A549 (cell line): ENCODE measurements at regions of chr7 and their contacts with region 1.

Region 1: DNA sequence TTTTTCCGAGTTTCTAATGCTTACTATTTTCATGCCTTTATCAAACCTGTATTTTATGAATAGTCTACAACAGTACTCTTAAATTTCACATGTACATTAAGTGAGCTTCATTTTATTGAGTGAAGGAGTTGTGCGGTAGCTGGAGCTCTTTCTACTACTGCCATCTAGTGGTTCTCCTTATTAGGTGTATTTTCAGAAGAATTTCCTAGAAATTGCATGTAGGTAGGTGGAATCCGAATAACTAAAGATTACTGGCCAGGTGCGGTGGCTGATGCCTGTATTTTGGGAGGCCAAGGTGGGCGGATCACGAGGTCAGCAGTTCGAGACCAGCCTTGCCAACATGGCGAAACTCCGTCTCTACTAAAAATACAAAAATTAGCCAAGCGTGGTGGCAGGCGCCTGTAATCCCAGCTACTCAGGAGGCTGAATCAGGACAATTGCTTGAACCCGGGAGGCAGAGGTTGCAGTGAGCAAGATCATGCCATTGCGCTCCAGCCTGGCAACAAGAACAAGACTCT is 38.3 kb downstream of the LRRC72 start:
- DNase-seq: peak; percentile 58 to 59
- ATAC-seq: peak; percentile 84 to 89; a peak in 5 of 6 replicates
- H3K4me3 ChIP-seq: no peak overlapping the region
- H3K27ac ChIP-seq: no peak overlapping the region
- H3K4me1 ChIP-seq: no peaks in the 10 kb centered on the region
- CTCF ChIP-seq: peak; percentile 88
- EP300 ChIP-seq: no peak
- POLR2A ChIP-seq: no peak
- RAD21 ChIP-seq: peak; percentile 91 to 93

Region 2: DNA sequence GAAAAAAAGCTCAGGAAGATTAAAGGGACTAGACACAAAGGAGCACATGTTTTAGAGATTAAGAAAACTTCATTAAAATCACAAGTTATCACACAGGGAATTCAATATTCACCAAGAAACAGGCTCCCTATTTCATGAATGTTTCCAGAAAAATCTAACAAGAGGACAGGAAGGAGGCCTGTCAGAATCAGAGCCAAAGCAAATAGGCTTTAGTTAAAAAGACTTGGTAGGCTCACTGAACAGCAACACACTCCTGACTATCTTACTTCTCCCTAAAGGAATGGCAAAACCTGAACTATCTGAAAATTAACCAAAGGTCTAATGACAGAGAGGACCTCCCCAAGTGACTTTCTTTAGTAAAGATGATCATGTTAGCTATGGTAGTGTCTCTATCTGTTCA is 690.2 kb before region 1 on chr7:
- CTCF ChIA-PET with region 1: no interaction called
- POLR2A ChIA-PET with region 1: no interaction called
- DNase-seq: no peak
- ATAC-seq: no peak
- H3K4me3 ChIP-seq: no peak overlapping the region
- H3K27ac ChIP-seq: no peak overlapping the region
- H3K4me1 ChIP-seq: no peaks in the 10 kb centered on the region
- CTCF ChIP-seq: no peak
- EP300 ChIP-seq: no peak
- POLR2A ChIP-seq: no peak
- RAD21 ChIP-seq: no peak

Region 3: DNA sequence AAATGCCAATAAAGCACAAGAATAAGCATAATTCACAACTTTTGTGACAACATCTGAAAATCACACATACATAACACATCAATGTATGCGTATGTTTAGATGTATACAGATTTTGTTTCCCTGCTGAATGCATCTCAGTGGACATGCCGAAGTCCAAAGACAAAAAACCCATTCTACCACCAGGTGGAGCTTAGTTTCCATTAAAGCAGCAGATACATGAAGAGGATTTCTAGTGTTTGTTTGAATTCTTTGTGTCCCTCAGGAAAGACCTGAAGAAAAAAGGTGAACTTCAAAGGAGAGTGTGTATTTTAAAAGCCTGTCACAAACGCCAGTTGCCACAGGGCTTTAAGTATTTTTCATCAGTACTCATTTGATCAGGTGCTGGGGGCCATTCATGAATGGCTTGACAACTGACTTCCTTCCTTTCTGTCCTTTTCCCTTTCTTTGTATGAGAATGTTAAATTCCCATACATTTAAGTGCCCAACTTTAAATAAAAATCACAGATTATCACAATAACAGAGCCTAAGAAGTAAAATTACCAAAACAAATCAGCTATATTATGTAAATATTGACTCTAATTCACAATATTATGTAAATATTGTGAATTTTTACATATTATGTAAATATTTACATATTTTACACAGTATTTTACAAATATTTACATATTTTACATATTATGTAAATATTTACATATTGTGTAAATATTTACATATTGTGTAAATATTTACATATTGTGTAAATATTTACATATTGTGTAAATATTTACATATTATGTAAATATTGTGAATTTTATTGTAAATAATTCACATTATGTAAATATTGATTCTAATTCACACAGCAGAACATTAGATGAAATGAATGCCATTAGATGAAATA is 486.7 kb before region 1 on chr7:
- CTCF ChIA-PET with region 1: interaction called, 45 read pairs
- POLR2A ChIA-PET with region 1: no interaction called
- DNase-seq: peak; percentile 20 to 71
- ATAC-seq: peak; percentile 87 to 88; a peak in 5 of 6 replicates
- H3K4me3 ChIP-seq: no peak overlapping the region
- H3K27ac ChIP-seq: no peak overlapping the region
- H3K4me1 ChIP-seq: peaks cover 1% of the 10 kb centered on the region; the same call in 1 of the 3 replicates
- CTCF ChIP-seq: peak; percentile 78
- EP300 ChIP-seq: no peak
- POLR2A ChIP-seq: no peak
- RAD21 ChIP-seq: peak; percentile 82 to 85

Region 4: DNA sequence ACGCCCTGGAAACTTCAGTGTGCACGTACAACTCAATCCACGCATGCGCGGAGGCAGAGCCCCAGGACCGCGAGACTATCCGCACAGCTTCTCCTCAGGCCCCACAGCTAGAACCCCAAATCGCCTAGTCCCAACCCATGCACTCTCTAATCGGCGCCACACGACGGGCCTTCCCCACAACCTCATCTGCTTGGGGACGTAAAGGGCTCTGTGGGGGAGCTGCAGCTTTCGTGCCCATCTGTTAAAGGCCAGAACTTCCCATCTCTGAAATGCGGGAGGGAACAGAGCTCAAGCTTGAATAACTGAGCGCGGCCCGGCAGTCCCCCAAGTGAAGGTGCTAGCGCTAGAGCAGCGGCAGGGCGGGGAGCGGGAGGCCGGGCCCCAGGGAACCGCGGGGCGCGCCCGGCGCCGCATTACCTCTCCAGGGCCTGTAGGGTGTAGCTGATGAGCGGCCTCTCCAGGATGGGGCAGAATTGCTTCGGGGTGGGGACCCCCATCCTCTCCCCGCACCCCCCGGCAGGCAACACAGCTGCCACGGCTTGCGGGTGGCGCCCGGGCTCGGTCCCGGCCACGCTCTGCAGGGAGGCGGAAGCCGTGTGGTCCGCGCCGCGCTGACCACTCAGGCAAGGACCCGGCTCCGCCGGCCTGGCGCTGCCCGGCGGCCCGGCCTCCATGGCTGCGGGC is 144.2 kb before region 1 on chr7:
- CTCF ChIA-PET with region 1: interaction called, 12 read pairs
- POLR2A ChIA-PET with region 1: interaction called, 9 read pairs
- DNase-seq: peak; percentile 76 to 94
- ATAC-seq: peak; percentile 96 to 97
- H3K4me3 ChIP-seq: peak overlapping the region; percentile 73
- H3K27ac ChIP-seq: peak overlapping the region; percentile 98
- H3K4me1 ChIP-seq: peaks cover 12% of the 10 kb centered on the region
- CTCF ChIP-seq: 0 out of 3 replicates have a peak, but pooled peaks have one; percentile 10
- EP300 ChIP-seq: no peak
- POLR2A ChIP-seq: peak; percentile 90
- RAD21 ChIP-seq: 0 out of 5 replicates have a peak, but pooled peaks of 1 of the 2 experiments have one; percentile 15

Region 5: GRCh38 chr7:16431646-16432424 is 133.1 kb before region 1 on chr7:
- CTCF ChIA-PET with region 1: interaction called, 145 read pairs
- POLR2A ChIA-PET with region 1: interaction called, 3 read pairs
- DNase-seq: peak; percentile 50 to 65
- ATAC-seq: peak; percentile 99
- H3K4me3 ChIP-seq: no peak overlapping the region
- H3K27ac ChIP-seq: no peak overlapping the region
- H3K4me1 ChIP-seq: no peaks in the 10 kb centered on the region
- CTCF ChIP-seq: peak; percentile 72
- EP300 ChIP-seq: no peak
- POLR2A ChIP-seq: no peak
- RAD21 ChIP-seq: peak; percentile 74 to 77

Region 6: GRCh38 chr7:16546921-16547505 is 18.0 kb before region 1 on chr7:
- CTCF ChIA-PET with region 1: interaction called, 28 read pairs
- POLR2A ChIA-PET with region 1: no interaction called
- DNase-seq: no peak
- ATAC-seq: no peak
- H3K4me3 ChIP-seq: no peak overlapping the region
- H3K27ac ChIP-seq: no peak overlapping the region
- H3K4me1 ChIP-seq: no peaks in the 10 kb centered on the region
- CTCF ChIP-seq: no peak
- EP300 ChIP-seq: no peak
- POLR2A ChIP-seq: no peak
- RAD21 ChIP-seq: no peak

Region 7: DNA sequence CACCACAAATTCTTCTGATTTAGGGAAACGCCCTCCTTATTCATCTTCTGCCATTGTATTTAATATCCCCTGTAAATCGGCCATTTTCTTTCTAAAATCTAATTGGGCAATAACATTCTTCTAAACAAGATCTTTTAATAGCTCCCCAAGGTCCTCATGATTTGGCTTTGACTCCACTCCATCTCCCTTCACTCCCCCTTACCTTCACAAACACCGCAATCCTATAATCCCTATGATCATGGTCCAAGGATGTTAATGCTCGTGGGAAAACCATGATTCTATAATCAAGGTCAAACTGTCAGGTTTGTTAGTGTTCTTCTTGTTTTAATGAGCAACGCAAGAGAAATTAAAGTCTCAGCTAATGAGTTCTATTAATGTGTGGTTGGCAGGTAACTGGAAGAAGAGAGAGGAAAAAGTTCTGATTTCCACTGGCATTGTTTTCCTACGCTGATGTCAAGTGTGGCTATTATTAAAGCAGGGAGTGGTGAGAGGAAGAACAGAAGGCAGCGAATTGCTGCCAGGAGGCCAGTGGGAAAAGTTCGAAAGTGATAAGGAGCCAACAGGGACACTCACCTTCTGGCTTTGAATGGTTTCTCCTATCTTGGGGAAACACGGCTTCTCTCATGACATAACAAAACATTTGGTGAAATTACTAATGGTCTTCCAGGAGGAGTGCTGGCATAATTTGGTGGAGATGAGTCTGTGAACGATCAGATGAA is 10.3 kb before region 1 on chr7:
- CTCF ChIA-PET with region 1: interaction called, 28 read pairs
- POLR2A ChIA-PET with region 1: no interaction called
- DNase-seq: no peak
- ATAC-seq: no peak
- H3K4me3 ChIP-seq: no peak overlapping the region
- H3K27ac ChIP-seq: no peak overlapping the region
- H3K4me1 ChIP-seq: no peaks in the 10 kb centered on the region
- CTCF ChIP-seq: no peak
- EP300 ChIP-seq: no peak
- POLR2A ChIP-seq: no peak
- RAD21 ChIP-seq: no peak